CD8-positive, alpha-beta memory T cell (primary cell): ENCODE measurements at regions of chr17 and their contacts with region 1.

Region 1: DNA sequence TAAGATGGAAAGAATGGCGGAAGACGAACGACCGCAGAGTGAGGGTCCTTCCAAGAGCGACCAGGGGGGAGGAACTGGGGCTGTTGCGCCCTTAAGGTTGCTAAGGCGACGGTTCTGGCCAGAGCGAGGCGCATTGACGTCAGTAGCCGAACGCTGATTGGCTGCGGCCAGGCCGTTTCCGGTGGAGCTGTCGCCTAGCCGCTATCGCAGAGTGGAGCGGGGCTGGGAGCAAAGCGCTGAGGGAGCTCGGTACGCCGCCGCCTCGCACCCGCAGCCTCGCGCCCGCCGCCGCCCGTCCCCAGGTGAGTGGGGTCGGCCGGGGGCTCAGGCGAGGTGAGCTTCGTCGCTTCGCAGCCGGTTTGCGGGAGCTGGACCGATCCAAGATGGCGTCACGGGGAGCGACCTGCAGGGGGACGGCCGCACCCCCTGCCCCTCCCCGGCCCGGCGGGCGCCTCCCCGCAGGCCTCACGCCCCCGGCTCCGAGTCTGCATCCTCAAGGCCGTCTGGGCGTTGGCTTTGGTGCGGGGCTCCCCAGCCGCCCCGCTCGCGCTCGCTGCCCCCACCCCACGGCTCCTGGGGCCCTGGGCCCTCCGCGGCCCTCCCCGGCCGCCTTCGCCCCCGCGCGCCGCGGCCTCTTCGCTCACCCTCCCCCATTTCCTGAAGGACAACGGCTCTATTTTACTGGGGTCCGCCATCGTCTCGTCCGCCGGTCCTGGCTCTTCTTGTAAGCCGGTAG is at the start of gene PRKAR1A:
- DNase-seq: peak; percentile 93 to 98 (median 97)
- H3K4me3 ChIP-seq: peak within 1 kb of the TSS; percentile 68
- H3K4me3 Mint-ChIP-seq: peak within 1 kb of the TSS; percentile 98 to 100 (median 99)
- H3K27ac ChIP-seq: peak within 1 kb of the TSS; percentile 99
- H3K27ac Mint-ChIP-seq: peak within 1 kb of the TSS; percentile 100
- H3K4me1 ChIP-seq: peaks cover 30% of the 10 kb centered on the region
- H3K4me1 Mint-ChIP-seq: peaks cover 44 to 60% (median 53%) of the 10 kb centered on the region in 3 donors
- H3K27me3 ChIP-seq: no peaks in the 10 kb centered on the region
- H3K27me3 Mint-ChIP-seq: no peaks in the 10 kb centered on the region
- total RNA-seq, gene PRKAR1A: 197 to 203 TPM

Region 2: DNA sequence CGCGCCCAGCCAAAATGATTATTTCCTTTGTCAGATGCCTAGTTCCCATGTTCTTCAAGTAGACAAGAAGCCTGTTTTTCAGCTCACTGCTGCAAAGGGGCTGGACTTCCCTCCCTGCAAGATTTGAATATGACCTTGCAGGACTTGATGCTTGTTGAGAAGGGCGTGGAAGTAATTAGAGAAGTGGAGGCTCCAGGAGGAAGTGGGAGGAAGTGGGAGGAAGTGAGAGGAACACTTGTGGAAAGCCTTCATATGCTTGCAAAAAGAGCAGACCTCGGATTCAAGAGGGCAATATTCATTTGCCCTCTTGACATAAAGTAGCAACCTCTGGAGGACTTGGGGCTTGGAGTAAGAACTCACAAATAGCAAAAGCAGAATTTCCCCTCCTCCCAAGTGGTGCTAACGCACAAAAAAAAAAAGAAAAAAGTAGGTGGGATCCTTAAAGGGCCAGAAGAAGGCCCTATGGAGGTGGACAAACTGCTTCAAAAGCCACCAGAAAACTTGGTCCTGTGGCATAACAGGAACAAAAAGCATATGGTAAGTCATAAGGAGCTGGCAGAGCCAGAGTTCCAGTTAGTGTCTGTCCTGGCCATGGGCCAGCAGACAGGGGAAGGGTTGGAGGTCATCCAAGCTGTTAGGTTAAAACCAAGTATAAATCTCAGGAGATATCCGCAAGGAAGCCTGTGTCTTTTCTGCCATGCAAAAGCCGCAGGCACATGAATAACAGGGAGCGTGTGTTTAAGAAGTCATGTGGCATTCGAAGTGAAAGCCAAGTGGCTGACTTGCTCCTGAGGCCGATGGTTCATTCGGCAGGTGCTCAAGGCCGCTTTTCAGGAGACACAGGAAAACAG is 20.8 kb before region 1 on chr17:
- CTCF ChIA-PET with region 1: interaction called, 11 read pairs
- POLR2A ChIA-PET with region 1: interaction called, 9 read pairs
- DNase-seq: no peak
- H3K4me3 ChIP-seq: no peak overlapping the region
- H3K4me3 Mint-ChIP-seq: no peak overlapping the region
- H3K27ac ChIP-seq: no peak overlapping the region
- H3K27ac Mint-ChIP-seq: peak overlapping the region in 1 of 8 donors; percentile 17
- H3K4me1 ChIP-seq: peaks cover 15% of the 10 kb centered on the region
- H3K4me1 Mint-ChIP-seq: peaks cover 12 to 17% (median 13%) of the 10 kb centered on the region in 3 donors
- H3K27me3 ChIP-seq: no peaks in the 10 kb centered on the region
- H3K27me3 Mint-ChIP-seq: peaks cover 0 to 1% of the 10 kb centered on the region in 2 donors

Region 3: DNA sequence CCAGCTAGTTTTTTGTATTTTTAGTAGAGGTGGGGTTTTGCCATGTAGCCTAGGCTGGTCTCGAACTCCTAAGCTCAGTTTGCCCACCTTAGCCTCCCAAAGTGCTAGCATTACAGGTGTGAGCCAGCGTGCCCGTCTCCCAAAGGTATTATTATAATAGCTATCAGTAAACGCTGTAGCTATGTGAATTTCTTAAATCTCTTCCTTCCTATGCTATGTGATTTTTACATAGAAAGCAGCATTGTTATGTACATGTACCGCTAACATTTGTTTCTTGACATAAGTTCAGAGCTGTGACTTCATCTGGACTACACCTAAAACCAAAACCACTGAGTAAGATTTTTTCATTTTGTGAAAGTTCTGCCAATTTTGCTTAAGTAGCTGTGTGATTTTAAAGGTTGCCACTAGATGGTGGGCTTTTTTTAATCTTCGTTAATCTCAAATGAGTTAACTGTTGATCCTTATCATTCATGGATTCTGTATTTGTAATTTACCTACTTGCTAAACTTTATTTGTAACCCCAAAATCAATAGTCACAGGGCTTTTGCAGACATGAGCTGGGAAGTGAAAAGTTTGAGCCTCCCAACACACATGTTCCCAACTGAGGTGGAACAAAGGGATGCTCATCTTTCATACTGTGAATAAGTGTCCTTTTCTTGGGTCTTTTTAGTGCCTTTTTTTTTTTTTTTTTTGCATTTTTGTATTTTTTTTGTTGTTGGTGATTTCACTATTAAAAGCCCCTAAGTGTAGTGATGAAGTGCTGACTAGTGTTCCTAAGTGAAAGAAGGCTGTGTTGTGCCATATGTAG is 21.7 kb after region 1 on chr17:
- CTCF ChIA-PET with region 1: no interaction called
- POLR2A ChIA-PET with region 1: no interaction called
- DNase-seq: no peak
- H3K4me3 ChIP-seq: no peak overlapping the region
- H3K4me3 Mint-ChIP-seq: no peak overlapping the region
- H3K27ac ChIP-seq: no peak overlapping the region
- H3K27ac Mint-ChIP-seq: peak overlapping the region in 7 of 8 donors; percentile 2 to 87 (median 28)
- H3K4me1 ChIP-seq: no peaks in the 10 kb centered on the region
- H3K4me1 Mint-ChIP-seq: peaks cover 0 to 4% (median 1%) of the 10 kb centered on the region in 3 donors
- H3K27me3 ChIP-seq: no peaks in the 10 kb centered on the region
- H3K27me3 Mint-ChIP-seq: no peaks in the 10 kb centered on the region